Right cardiac atrium (tissue), 5 donors: ENCODE measurements at regions of chr11 and their contacts with region 1.

Region 1: GRCh38 chr11:57456960-57457642 is 3.2 kb upstream of the RTN4RL2 start:
- DNase-seq: peak; percentile 92 to 97 (median 96)
- ATAC-seq: peak; percentile 89 to 90
- H3K4me3 ChIP-seq: no peak overlapping the region
- H3K27ac ChIP-seq: no peak overlapping the region
- H3K4me1 ChIP-seq: no peaks in the 10 kb centered on the region
- H3K27me3 ChIP-seq: no peaks in the 10 kb centered on the region

Region 2: GRCh38 chr11:57345555-57346211 is 111.4 kb before region 1 on chr11:
- intact Hi-C with region 1: loop called in 2 of 4 experiments (anchors 5 to 10 kb)
- DNase-seq: peak; percentile 63 to 84 (median 81)
- ATAC-seq: peak; percentile 76 to 77
- H3K4me3 ChIP-seq: no peak overlapping the region
- H3K27ac ChIP-seq: no peak overlapping the region
- H3K4me1 ChIP-seq: no peaks in the 10 kb centered on the region
- H3K27me3 ChIP-seq: no peaks in the 10 kb centered on the region

Region 3: GRCh38 chr11:57527056-57527631 is 70.0 kb after region 1 on chr11:
- intact Hi-C with region 1: loop called (anchors 2 to 5 kb)
- DNase-seq: peak; percentile 65 to 90 (median 79)
- ATAC-seq: no peak
- H3K4me3 ChIP-seq: no peak overlapping the region
- H3K27ac ChIP-seq: no peak overlapping the region
- H3K4me1 ChIP-seq: no peaks in the 10 kb centered on the region
- H3K27me3 ChIP-seq: no peaks in the 10 kb centered on the region

Region 4: GRCh38 chr11:57567515-57568329 is 110.6 kb after region 1 on chr11 and contains the start of gene UBE2L6:
- intact Hi-C with region 1: loop called in 1 of 4 experiments (anchors 5 kb)
- DNase-seq: peak; percentile 85 to 96 (median 93)
- ATAC-seq: peak; percentile 86 to 87
- H3K4me3 ChIP-seq: peak within 1 kb of the TSS; percentile 88
- H3K27ac ChIP-seq: peak within 1 kb of the TSS; percentile 66
- H3K4me1 ChIP-seq: peaks cover 6% of the 10 kb centered on the region
- H3K27me3 ChIP-seq: no peaks in the 10 kb centered on the region
- total RNA-seq, gene UBE2L6: 22.6 to 28.8 (median 24.6) TPM

Region 5: GRCh38 chr11:57644748-57645688 is 187.9 kb after region 1 on chr11:
- intact Hi-C with region 1: loop called in 1 of 4 experiments (anchors 10 kb)
- DNase-seq: peak; percentile 77 to 92 (median 90)
- ATAC-seq: peak; percentile 76 to 81
- H3K4me3 ChIP-seq: no peak overlapping the region
- H3K27ac ChIP-seq: no peak overlapping the region
- H3K4me1 ChIP-seq: peaks cover 18% of the 10 kb centered on the region
- H3K27me3 ChIP-seq: no peaks in the 10 kb centered on the region

Region 6: GRCh38 chr11:58513747-58514367 is 1056.8 kb after region 1 on chr11:
- intact Hi-C with region 1: loop called in 1 of 4 experiments (anchors 10 kb)
- DNase-seq: no peak
- ATAC-seq: peak; percentile 45 to 70
- H3K4me3 ChIP-seq: no peak overlapping the region
- H3K27ac ChIP-seq: no peak overlapping the region
- H3K4me1 ChIP-seq: no peaks in the 10 kb centered on the region
- H3K27me3 ChIP-seq: no peaks in the 10 kb centered on the region